Activated CD8-positive, alpha-beta T cell treated with anti-CD3 and anti-CD28 coated beads, Interleukin-2, amount 10 ng/mL, durations not matched to agents 7 days and 5 days (primary cell): ENCODE measurements at regions of chr1 and their contacts with region 1.

Region 1: DNA sequence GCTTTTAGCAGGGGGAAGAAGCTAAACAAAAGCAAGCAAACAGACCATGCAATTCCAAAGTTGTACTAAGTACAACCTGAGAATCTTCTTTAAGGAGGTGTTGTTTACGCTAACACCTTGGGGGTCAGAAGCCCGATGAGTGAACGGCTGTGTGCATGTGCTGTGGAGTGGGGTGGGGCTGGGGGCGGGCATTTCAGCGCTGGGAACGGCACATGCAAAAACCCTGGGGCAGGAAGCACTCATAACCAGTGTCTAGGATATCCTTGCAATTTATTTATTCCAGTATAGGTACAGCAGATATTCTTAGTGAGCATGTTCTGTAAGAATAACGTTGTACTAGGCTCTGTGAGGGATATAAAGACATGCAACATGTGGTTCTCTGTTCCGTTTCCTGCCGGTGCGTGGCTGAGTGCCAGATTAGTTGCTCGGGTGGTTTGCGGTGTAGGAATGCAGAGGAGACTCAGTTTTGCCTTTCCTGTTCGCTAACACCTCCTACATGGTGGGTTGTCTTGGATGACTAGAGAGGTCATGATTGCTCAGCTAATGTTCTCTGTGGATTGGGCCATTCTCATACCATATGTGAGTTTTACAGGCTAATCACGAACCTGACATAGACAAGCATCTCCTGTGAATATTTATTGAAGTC is 3.7 kb downstream of the FASLG start:
- DNase-seq: peak; percentile 93
- ATAC-seq: peak; percentile 80
- H3K4me3 Mint-ChIP-seq: peak overlapping the region; percentile 81
- H3K27ac Mint-ChIP-seq: peak overlapping the region; percentile 83
- H3K4me1 Mint-ChIP-seq: peaks cover 81% of the 10 kb centered on the region
- H3K27me3 Mint-ChIP-seq: no peaks in the 10 kb centered on the region

Region 2: GRCh38 chr1:172466795-172467407 is 195.7 kb before region 1 on chr1:
- CTCF ChIA-PET with region 1: no interaction called
- POLR2A ChIA-PET with region 1: no interaction called
- DNase-seq: no peak
- ATAC-seq: no peak
- H3K4me3 Mint-ChIP-seq: no peak overlapping the region
- H3K27ac Mint-ChIP-seq: no peak overlapping the region
- H3K4me1 Mint-ChIP-seq: peaks cover 11% of the 10 kb centered on the region
- H3K27me3 Mint-ChIP-seq: peaks cover 13% of the 10 kb centered on the region

Region 3: DNA sequence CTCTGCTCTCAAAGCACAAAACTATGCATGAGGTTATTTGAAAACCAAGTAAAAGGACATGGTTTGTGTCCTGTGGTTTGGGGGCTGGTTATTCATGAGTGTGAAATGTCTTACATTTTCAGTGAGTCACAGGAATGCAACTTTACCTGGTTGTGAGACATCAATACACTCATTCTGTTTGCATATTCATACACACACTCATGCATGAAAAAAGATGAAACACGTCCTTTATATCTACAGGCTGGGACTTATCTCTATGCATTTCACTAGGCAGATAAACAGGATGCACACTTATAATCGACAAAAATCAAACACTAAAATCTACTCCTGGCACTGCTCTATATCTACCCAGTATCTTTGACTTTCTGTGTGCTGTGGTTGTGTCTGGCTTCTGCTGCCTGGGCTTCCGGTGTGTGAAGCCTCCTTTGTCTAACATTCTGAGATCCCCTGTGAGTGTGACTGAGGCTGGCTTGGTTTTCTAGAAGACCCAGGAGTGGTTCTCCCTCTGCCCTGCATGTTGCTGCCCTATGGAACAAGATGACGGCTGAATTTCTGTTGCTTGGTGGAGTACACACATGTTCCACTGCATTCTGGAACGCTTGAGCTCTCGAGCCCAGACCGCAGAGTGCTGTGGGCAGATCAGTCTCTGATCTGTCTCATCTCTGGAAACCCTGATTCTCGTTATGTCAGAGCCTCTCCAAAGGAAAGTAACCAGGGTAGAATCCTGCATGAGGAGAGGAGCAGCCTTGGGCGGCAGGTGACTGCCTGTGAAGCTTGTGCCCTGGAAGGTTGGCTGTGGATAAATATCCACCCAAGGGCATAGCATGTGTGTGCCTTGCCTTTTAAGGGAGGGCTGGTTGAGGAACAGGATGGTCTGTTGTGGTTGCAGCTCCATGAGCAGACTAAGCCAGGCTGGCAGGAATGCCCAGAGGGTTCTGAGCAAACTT is 23.4 kb before region 1 on chr1:
- CTCF ChIA-PET with region 1: interaction called, 13 read pairs
- POLR2A ChIA-PET with region 1: interaction called, 4 read pairs
- DNase-seq: peak; percentile 87
- ATAC-seq: peak; percentile 81
- H3K4me3 Mint-ChIP-seq: peak overlapping the region; percentile 69
- H3K27ac Mint-ChIP-seq: peak overlapping the region; percentile 95
- H3K4me1 Mint-ChIP-seq: peaks cover 74% of the 10 kb centered on the region
- H3K27me3 Mint-ChIP-seq: no peaks in the 10 kb centered on the region